Mammary epithelial cell (primary cell): ENCODE measurements at regions of chr1 and their contacts with region 1.

Region 1: DNA sequence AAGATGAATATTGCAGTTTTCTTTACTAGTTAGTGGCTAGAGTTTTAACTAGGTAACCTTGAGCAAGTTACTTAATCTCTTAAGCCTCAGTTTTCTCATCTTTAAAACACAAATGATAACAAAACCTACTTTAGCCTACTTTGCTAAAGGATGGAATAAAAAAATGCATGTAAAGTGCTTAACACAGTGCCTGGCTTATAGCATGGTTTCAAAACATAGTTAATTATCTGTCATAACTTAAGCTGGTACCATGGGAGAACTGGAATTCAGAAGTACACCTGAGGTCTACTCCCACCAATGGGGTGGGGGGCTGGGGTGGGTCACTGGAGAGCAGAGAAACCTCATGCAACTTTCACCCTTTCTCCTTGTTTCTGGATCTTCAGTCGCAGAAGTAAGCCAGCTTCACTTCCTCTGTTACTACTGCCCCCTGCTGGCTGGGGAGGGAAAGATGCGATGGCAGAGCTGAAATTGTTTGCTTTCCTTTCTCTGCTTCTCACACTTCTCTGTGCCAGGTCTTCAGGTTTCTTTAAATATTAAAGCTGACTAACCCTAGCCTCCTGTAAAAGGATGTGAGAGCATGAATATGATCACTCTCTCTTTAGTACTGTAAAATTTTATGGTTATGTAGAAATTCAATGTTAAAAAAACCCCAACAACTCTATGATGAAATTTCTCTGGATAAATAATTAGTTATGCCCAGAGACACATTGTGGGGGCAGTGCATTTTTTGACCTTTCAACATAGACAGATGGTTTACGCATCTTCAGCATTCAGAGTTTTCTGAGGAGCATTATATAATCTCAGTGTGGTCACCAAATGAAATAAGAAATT is 324.2 kb downstream of the HLX start:
- DNase-seq: peak; percentile 43
- H3K4me3 ChIP-seq: no peak overlapping the region
- H3K27ac ChIP-seq: no peak overlapping the region
- H3K4me1 ChIP-seq: no peaks in the 10 kb centered on the region
- H3K27me3 ChIP-seq: no peaks in the 10 kb centered on the region
- CTCF ChIP-seq: peak; percentile 85 to 93

Region 2: GRCh38 chr1:220810179-220810653 is 393.2 kb before region 1 on chr1:
- CTCF ChIA-PET with region 1: no interaction called
- dilution Hi-C with region 1: no loop called
- in situ Hi-C with region 1: no loop called
- intact Hi-C with region 1: loop called (anchors 1 kb)
- DNase-seq: no peak
- H3K4me3 ChIP-seq: no peak overlapping the region
- H3K27ac ChIP-seq: no peak overlapping the region
- H3K4me1 ChIP-seq: peaks cover 15% of the 10 kb centered on the region
- H3K27me3 ChIP-seq: no peaks in the 10 kb centered on the region
- CTCF ChIP-seq: peak; percentile 71 to 81

Region 3: DNA sequence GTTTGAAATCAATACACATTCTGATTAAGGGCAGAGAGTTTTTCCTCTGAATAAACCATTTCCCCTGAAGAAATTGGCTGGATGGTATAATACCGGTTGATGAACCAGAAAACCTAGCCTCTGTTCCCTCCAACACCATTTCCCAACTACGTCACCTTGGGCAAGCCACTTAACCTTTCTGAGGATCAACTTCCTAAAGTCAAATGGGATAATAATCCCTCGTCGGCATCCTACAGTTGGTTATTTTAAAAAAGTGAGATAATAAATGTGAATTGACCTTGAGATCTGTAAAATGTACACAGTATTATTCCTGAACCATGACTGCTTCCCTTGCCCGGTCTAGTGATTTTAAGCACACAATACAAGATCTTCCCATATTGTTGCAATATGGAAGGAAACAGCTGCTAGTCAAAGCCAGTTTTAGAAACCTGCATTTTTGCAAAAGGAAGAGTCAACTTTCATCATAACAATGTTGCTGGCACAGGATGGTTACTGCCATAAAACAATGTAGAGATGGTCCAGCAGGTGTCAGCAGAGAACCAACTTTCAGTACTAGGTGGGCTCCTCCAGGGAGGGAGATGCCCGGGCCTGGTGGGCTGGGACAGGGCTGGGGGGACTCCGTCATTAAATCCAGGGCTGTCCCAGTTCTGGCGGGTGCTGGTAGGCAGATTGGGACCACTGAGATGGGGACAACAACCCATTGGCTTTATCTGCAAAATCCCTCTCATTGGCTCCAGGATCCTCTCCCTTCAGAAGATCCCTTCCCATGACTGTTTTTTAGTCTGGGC is 329.4 kb before region 1 on chr1:
- CTCF ChIA-PET with region 1: no interaction called
- dilution Hi-C with region 1: no loop called
- in situ Hi-C with region 1: loop called (anchors 5 to 10 kb)
- intact Hi-C with region 1: loop called (anchors 1 kb)
- DNase-seq: no peak
- H3K4me3 ChIP-seq: no peak overlapping the region
- H3K27ac ChIP-seq: no peak overlapping the region
- H3K4me1 ChIP-seq: peaks cover 5% of the 10 kb centered on the region
- H3K27me3 ChIP-seq: peaks cover 19% of the 10 kb centered on the region
- CTCF ChIP-seq: peak; percentile 67 to 71

Region 4: GRCh38 chr1:220879076-220879508 is 324.3 kb before region 1 on chr1 and contains the start of gene HLX:
- CTCF ChIA-PET with region 1: no interaction called
- dilution Hi-C with region 1: no loop called
- in situ Hi-C with region 1: loop called (anchors 5 to 10 kb)
- intact Hi-C with region 1: loop called (anchors 1 kb)
- DNase-seq: peak; percentile 60
- H3K4me3 ChIP-seq: peak within 1 kb of the TSS; percentile 55 to 72 (median 58)
- H3K27ac ChIP-seq: no peak within 1 kb of the TSS
- H3K4me1 ChIP-seq: peaks cover 12% of the 10 kb centered on the region
- H3K27me3 ChIP-seq: peaks cover 45% of the 10 kb centered on the region
- CTCF ChIP-seq: no peak
- total RNA-seq, gene HLX: 0.33 to 0.61 TPM

Region 5: DNA sequence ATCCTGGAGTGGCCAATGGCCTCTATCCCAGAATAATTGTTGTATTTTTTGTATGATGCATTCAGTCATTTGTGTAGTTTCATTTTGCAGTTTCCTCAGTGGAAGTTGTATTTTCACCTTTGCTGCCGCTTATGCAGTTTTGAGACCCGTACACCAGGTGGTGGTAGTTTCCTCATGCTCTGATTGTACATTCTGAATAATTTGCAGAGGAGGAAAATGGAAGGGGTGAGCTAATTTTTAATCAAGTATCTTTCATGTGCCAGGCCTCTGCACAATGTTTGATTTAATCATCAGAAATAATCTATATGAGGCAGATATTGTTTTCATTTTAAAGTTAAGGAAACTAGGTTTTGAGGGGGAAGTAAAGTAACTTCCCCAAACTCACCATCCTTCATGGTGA is 294.7 kb before region 1 on chr1:
- CTCF ChIA-PET with region 1: no interaction called
- dilution Hi-C with region 1: no loop called
- in situ Hi-C with region 1: no loop called
- intact Hi-C with region 1: loop called (anchors 1 kb)
- DNase-seq: no peak
- H3K4me3 ChIP-seq: no peak overlapping the region
- H3K27ac ChIP-seq: no peak overlapping the region
- H3K4me1 ChIP-seq: peaks cover 5% of the 10 kb centered on the region
- H3K27me3 ChIP-seq: no peaks in the 10 kb centered on the region
- CTCF ChIP-seq: peak; percentile 47 to 67

Region 6: DNA sequence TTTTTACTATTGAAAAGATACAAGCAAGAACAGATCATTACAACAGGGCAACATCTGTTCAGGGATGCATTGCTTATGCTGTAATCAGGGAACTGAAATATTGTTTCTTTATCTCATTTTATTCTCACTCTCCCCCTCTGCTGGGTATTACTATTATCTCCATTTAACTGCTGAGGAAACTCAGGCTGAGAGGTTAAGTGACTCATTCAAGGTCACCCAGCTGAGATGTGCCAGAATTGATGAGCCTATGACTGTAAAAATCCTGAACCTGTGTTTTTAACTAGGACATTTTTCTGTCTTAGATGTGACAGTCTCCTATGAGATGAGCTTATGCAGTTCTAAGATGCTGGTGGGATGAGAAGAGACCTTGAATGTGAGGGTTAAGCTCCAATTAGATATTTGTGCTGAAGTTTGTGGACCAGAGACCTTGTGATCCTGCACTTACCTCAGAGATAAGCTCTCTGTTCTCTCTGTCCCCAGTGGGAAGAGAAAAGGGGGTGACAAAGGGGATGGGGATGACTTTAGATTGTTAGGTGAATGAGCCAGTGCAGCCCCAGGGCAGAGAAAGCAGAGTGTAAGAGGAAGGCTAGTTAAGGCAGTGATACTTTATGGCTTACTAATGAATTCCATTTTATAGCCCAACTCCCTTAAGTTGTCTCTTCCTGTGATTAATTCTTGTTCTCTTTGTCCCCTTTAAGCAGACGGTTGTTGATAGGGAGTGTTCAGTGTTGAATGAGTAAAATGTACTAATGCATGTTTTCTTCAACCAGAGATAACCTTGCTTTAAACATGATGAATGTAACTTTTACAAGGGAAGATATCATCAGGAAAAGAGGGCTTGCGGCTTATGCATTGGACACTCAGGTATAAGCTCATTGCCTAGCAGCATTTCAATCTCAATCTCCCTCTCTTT is 212.8 kb before region 1 on chr1:
- CTCF ChIA-PET with region 1: no interaction called
- dilution Hi-C with region 1: no loop called
- in situ Hi-C with region 1: no loop called
- intact Hi-C with region 1: loop called (anchors 1 kb)
- DNase-seq: peak; percentile 29
- H3K4me3 ChIP-seq: no peak overlapping the region
- H3K27ac ChIP-seq: no peak overlapping the region
- H3K4me1 ChIP-seq: no peaks in the 10 kb centered on the region
- H3K27me3 ChIP-seq: peaks cover 9% of the 10 kb centered on the region
- CTCF ChIP-seq: peak in 1 of 2 donors; percentile 23

Region 7: GRCh38 chr1:221435504-221435904 is 232.1 kb after region 1 on chr1:
- CTCF ChIA-PET with region 1: interaction called, 7 read pairs
- dilution Hi-C with region 1: no loop called
- in situ Hi-C with region 1: no loop called
- intact Hi-C with region 1: loop called (anchors 1 kb)
- DNase-seq: peak; percentile 37
- H3K4me3 ChIP-seq: no peak overlapping the region
- H3K27ac ChIP-seq: no peak overlapping the region
- H3K4me1 ChIP-seq: peaks cover 19% of the 10 kb centered on the region
- H3K27me3 ChIP-seq: no peaks in the 10 kb centered on the region
- CTCF ChIP-seq: peak; percentile 87 to 96